CD8-positive, alpha-beta memory T cell (primary cell): ENCODE measurements at regions of chr5 and their contacts with region 1.

Region 1: GRCh38 chr5:140178086-140178410 is 3.1 kb downstream of the CYSTM1 start:
- DNase-seq: no peak
- H3K4me3 ChIP-seq: no peak overlapping the region
- H3K4me3 Mint-ChIP-seq: peak overlapping the region in 1 of 7 donors; percentile 70
- H3K27ac ChIP-seq: peak overlapping the region; percentile 65
- H3K27ac Mint-ChIP-seq: peak overlapping the region in 2 of 8 donors; percentile 47 to 85
- H3K4me1 ChIP-seq: peaks cover 11% of the 10 kb centered on the region
- H3K4me1 Mint-ChIP-seq: peaks cover 9 to 21% (median 13%) of the 10 kb centered on the region in 3 donors
- H3K27me3 ChIP-seq: no peaks in the 10 kb centered on the region
- H3K27me3 Mint-ChIP-seq: peaks cover 0 to 2% of the 10 kb centered on the region in 2 donors

Region 2: GRCh38 chr5:139837631-139838422 is 340.2 kb before region 1 on chr5:
- CTCF ChIA-PET with region 1: no interaction called
- POLR2A ChIA-PET with region 1: interaction called, 15 read pairs
- DNase-seq: peak in 1 of 5 donors; percentile 27
- H3K4me3 ChIP-seq: no peak overlapping the region
- H3K4me3 Mint-ChIP-seq: no peak overlapping the region
- H3K27ac ChIP-seq: no peak overlapping the region
- H3K27ac Mint-ChIP-seq: no peak overlapping the region
- H3K4me1 ChIP-seq: no peaks in the 10 kb centered on the region
- H3K4me1 Mint-ChIP-seq: no peaks in the 10 kb centered on the region
- H3K27me3 ChIP-seq: peaks cover 4% of the 10 kb centered on the region
- H3K27me3 Mint-ChIP-seq: peaks cover 23 to 31% of the 10 kb centered on the region in 2 donors